H1 (cell line): ENCODE measurements at regions of chr7 and their contacts with region 1.

Region 1: GRCh38 chr7:158740013-158740656 is 35.5 kb upstream of the NCAPG2 start:
- DNase-seq: peak in 1 of 2 experiments; percentile 40
- H3K4me3 ChIP-seq: no peak overlapping the region
- H3K27ac ChIP-seq: no peak overlapping the region
- H3K4me1 ChIP-seq: no peaks in the 10 kb centered on the region
- H3K27me3 ChIP-seq: no peaks in the 10 kb centered on the region
- CTCF ChIP-seq: no peak
- EP300 ChIP-seq: no peak
- POLR2A ChIP-seq: no peak
- RAD21 ChIP-seq: no peak

Region 2: DNA sequence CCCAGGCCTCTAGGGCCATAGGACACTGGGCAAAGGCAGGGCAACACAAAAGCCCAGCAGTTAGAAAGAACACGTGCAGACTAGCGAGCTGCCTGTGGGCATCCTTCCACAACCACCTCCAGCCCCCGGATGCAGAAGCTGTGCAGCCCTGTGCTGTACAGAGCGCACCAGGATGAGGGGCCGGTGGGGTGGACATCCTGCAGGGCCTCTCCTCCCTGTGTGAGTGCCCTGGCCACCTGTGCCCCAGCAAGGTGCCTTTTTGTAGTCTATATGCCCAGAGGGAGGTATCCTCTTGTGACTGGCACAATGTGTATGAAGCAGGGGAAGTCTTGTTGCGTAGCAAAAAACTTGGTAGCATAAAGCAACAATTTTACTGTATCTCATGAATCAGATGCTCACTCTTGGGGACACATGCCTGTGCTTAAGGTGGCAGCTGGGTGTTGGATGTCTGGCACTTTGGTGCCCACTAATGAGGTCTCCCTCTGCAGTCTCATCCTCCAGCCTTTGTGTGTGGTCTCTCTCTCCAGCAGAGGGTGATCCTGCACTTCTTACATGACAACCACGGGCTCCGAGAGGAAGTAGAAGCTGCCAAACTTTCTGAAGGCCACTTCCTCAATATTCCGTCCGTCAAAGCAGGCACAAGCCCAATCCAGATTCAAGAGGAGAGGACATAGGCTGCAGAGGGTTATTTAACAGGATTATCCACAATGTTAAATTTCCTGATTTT is 44.2 kb before region 1 on chr7:
- CTCF ChIA-PET with region 1: interaction called, 25 read pairs
- POLR2A ChIA-PET with region 1: no interaction called
- DNase-seq: no peak
- H3K4me3 ChIP-seq: no peak overlapping the region
- H3K27ac ChIP-seq: no peak overlapping the region
- H3K4me1 ChIP-seq: peaks cover 0 to 3% (median 0%) of the 10 kb centered on the region in 4 experiments; a peak in 1 of 7 replicates
- H3K27me3 ChIP-seq: no peaks in the 10 kb centered on the region
- CTCF ChIP-seq: peak; percentile 33 to 56 (median 49)
- EP300 ChIP-seq: no peak
- POLR2A ChIP-seq: no peak
- RAD21 ChIP-seq: peak; percentile 72 to 82